H1 (cell line): ENCODE measurements at regions of chr2 and their contacts with region 1.

Region 1: DNA sequence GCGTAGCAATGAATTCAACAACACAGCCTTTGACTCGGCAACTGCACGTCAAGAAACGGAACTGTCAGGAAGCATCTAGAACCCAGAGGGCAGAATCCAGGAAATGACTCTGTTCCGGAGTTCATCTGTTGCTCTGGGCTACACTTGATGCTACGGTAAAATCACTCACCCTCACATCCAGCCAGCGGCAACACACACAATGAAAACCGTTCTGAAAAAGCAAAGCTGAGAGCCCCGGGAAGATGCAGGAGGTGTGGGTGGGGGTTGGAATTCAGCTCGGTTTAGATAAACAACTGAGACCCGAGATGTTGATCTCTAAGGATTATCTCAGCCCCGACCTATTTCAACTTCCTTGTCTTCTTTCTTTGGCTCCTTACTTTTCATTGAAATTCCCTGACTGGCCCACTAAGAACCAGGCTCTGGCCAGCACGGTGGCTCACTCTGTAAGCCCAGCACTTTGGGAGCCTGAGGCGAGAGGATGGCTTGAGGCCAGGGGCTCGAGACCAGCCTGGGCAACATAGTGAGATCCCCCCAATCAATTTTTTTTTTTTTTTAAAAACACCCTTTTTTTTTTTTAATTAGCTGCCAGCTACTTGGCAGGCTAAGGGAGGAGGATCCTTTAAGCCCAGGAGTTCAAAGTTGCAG is 13.3 kb upstream of the RAB17 start:
- DNase-seq: no peak
- H3K4me3 ChIP-seq: no peak overlapping the region
- H3K27ac ChIP-seq: no peak overlapping the region
- H3K4me1 ChIP-seq: peaks cover 0 to 14% (median 5%) of the 10 kb centered on the region in 4 experiments; a peak in 4 of 7 replicates
- H3K27me3 ChIP-seq: no peaks in the 10 kb centered on the region
- CTCF ChIP-seq: no peak
- EP300 ChIP-seq: no peak
- POLR2A ChIP-seq: no peak
- RAD21 ChIP-seq: no peak

Region 2: GRCh38 chr2:237581751-237582746 is 21.8 kb before region 1 on chr2:
- CTCF ChIA-PET with region 1: interaction called, 11 read pairs
- POLR2A ChIA-PET with region 1: interaction called, 10 read pairs
- DNase-seq: no peak
- H3K4me3 ChIP-seq: no peak overlapping the region
- H3K27ac ChIP-seq: no peak overlapping the region
- H3K4me1 ChIP-seq: peaks cover 0 to 19% (median 14%) of the 10 kb centered on the region in 4 experiments; a peak in 6 of 7 replicates
- H3K27me3 ChIP-seq: no peaks in the 10 kb centered on the region
- CTCF ChIP-seq: peak in 2 of 3 experiments; percentile 30 to 51; a peak in 2 of 4 replicates
- EP300 ChIP-seq: no peak
- POLR2A ChIP-seq: no peak
- RAD21 ChIP-seq: peak; percentile 54 to 69

Region 3: GRCh38 chr2:237590272-237591140 is 13.3 kb before region 1 on chr2 and contains the start of gene RAB17:
- CTCF ChIA-PET with region 1: interaction called, 47 read pairs
- POLR2A ChIA-PET with region 1: interaction called, 17 read pairs
- DNase-seq: no peak
- H3K4me3 ChIP-seq: peak within 1 kb of the TSS; percentile 45 to 59 (median 58)
- H3K27ac ChIP-seq: peak within 1 kb of the TSS; percentile 25; the same call in 1 of the 2 replicates
- H3K4me1 ChIP-seq: peaks cover 19 to 62% (median 33%) of the 10 kb centered on the region in 4 experiments
- H3K27me3 ChIP-seq: no peaks in the 10 kb centered on the region
- CTCF ChIP-seq: no peak
- EP300 ChIP-seq: no peak
- POLR2A ChIP-seq: peak in 1 of 2 experiments; percentile 45; a peak in 1 of 3 replicates
- RAD21 ChIP-seq: no peak
- total RNA-seq, gene RAB17: 83.4 and 83.8 TPM in 2 replicates

Region 4: GRCh38 chr2:237616734-237617586 is 13.1 kb after region 1 on chr2:
- CTCF ChIA-PET with region 1: interaction called, 63 read pairs
- POLR2A ChIA-PET with region 1: interaction called, 51 read pairs
- DNase-seq: no peak
- H3K4me3 ChIP-seq: no peak overlapping the region
- H3K27ac ChIP-seq: no peak overlapping the region
- H3K4me1 ChIP-seq: peaks cover 9 to 21% (median 17%) of the 10 kb centered on the region in 4 experiments
- H3K27me3 ChIP-seq: no peaks in the 10 kb centered on the region; a peak in 1 of 7 replicates
- CTCF ChIP-seq: no peak
- EP300 ChIP-seq: no peak
- POLR2A ChIP-seq: no peak
- RAD21 ChIP-seq: no peak

Region 5: GRCh38 chr2:237627441-237628246 is 23.8 kb after region 1 on chr2 and contains the start of gene LRRFIP1:
- CTCF ChIA-PET with region 1: interaction called, 4 read pairs
- POLR2A ChIA-PET with region 1: interaction called, 11 read pairs
- DNase-seq: peak in 1 of 2 experiments; percentile 54
- H3K4me3 ChIP-seq: peak within 1 kb of the TSS; percentile 54 to 75 (median 56)
- H3K27ac ChIP-seq: no peak within 1 kb of the TSS
- H3K4me1 ChIP-seq: peaks cover 3 to 13% (median 8%) of the 10 kb centered on the region in 4 experiments; a peak in 5 of 7 replicates
- H3K27me3 ChIP-seq: peaks cover 0 to 31% (median 24%) of the 10 kb centered on the region in 4 experiments; a peak in 6 of 7 replicates
- CTCF ChIP-seq: no peak
- EP300 ChIP-seq: no peak
- POLR2A ChIP-seq: no peak
- RAD21 ChIP-seq: no peak
- total RNA-seq, gene LRRFIP1: 68.6 and 75.8 TPM in 2 replicates

Region 6: GRCh38 chr2:237639836-237640220 is 36.0 kb after region 1 on chr2:
- CTCF ChIA-PET with region 1: interaction called, 16 read pairs
- POLR2A ChIA-PET with region 1: interaction called, 4 read pairs
- DNase-seq: no peak
- H3K4me3 ChIP-seq: no peak overlapping the region
- H3K27ac ChIP-seq: no peak overlapping the region
- H3K4me1 ChIP-seq: no peaks in the 10 kb centered on the region
- H3K27me3 ChIP-seq: no peaks in the 10 kb centered on the region
- CTCF ChIP-seq: no peak
- EP300 ChIP-seq: no peak
- POLR2A ChIP-seq: no peak
- RAD21 ChIP-seq: no peak

Region 7: DNA sequence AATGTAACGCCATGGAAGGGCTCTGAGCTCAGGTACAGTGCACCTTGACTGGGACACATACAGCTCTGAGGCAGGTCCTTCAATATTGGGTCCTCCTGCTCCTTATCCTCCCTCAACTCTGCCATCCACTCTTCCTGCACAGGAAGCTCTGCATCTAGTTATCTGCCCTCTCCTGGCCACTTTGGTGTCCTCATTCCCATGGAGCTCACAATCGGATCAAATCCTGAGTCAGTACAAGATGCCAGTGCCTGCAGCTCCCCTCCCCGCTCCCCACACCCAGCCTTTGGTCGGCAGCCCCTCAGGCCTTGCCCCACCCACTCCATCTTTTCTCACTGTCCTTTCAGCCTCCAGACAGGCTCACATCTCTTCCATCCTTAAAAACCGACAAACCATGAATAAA is 81.6 kb after region 1 on chr2:
- CTCF ChIA-PET with region 1: interaction called, 23 read pairs
- POLR2A ChIA-PET with region 1: no interaction called
- DNase-seq: no peak
- H3K4me3 ChIP-seq: no peak overlapping the region
- H3K27ac ChIP-seq: no peak overlapping the region
- H3K4me1 ChIP-seq: no peaks in the 10 kb centered on the region
- H3K27me3 ChIP-seq: no peaks in the 10 kb centered on the region
- CTCF ChIP-seq: peak; percentile 35 to 67 (median 57)
- EP300 ChIP-seq: no peak
- POLR2A ChIP-seq: no peak
- RAD21 ChIP-seq: peak; percentile 44 to 64

Region 8: GRCh38 chr2:237858294-237859081 is 254.6 kb after region 1 on chr2:
- CTCF ChIA-PET with region 1: no interaction called
- POLR2A ChIA-PET with region 1: no interaction called
- DNase-seq: peak; percentile 36 to 69
- H3K4me3 ChIP-seq: peak overlapping the region; percentile 24 to 56 (median 44)
- H3K27ac ChIP-seq: no peak overlapping the region
- H3K4me1 ChIP-seq: peaks cover 0 to 10% (median 4%) of the 10 kb centered on the region in 4 experiments; a peak in 6 of 7 replicates
- H3K27me3 ChIP-seq: peaks cover 9 to 32% (median 23%) of the 10 kb centered on the region in 4 experiments
- CTCF ChIP-seq: peak; percentile 89 to 92 (median 92)
- EP300 ChIP-seq: no peak
- POLR2A ChIP-seq: no peak
- RAD21 ChIP-seq: peak; percentile 96 to 97